AG04449 (cell line): ENCODE measurements at regions of chr1 and their contacts with region 1.

Region 1: DNA sequence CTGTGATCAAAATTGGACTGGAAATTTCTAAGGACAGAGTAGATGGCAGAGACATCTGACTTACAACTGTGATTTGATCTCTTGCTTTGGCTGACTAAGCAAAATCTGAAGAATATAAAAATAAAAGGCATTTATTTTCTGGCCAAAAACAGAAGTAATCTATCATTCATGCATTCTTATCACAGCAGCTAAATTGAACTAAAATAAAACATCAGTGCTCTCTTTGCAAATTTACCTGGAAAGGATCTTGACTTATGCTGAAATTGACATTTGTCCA is 81.4 kb upstream of the ZNF678 start:
- DNase-seq: no peak
- H3K4me3 ChIP-seq: no peak overlapping the region
- CTCF ChIP-seq: no peak

Region 2: DNA sequence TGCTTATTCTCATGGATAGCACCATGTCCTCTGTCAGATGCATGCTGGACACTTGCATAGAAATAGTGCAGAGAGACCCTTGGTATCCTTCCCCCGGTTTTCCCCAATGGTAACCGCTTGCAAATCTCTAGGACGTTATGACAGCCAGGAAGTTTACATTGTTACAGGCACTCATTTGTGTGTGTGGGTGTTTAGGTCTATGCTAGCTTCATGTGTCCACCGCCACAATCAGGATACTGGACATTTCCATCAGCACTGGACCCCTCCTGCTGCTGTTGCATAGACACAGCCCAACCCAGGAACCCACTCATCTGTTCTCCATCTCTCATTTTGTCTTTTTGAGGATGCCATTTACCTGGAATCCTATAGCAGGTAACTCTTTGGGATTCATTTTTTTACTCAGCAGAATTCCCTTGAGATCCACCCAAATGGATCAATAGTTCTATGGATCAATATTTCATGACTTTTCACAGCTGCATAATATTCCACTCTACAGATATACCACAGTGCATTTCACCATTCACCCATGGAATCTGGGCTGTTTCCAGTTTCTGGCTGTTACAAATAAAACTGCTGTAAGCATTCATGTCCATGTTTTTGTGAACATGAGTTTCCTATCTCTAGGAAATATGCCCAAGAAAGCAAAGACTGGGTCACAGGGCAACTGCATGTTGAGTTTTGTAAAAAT is 472.3 kb after region 1 on chr1:
- CTCF ChIA-PET with region 1: interaction called, 21 read pairs
- POLR2A ChIA-PET with region 1: no interaction called
- DNase-seq: no peak
- H3K4me3 ChIP-seq: no peak overlapping the region
- CTCF ChIP-seq: no peak